A549 (cell line): ENCODE measurements at regions of chr15 and their contacts with region 1.

Region 1: DNA sequence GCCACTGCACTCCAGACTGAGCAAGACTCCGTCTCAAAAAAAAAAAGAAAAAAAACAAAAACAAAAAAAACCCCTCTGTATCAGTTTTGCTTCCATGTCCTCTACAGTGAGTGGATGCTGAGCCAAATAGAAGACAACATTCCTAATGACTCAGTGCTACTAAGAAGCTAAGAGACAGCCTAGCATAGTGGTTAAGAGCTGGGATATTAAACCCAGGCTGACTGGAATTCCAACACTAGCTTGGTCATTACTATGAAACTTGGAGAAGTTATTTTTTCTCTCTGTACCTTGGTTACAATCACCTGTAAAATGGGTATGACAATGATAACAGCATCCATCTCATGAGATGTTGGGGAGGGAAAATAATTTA is 60.9 kb upstream of the PYGO1 start:
- DNase-seq: no peak
- ATAC-seq: peak in 1 of 2 experiments; percentile 69; a peak in 3 of 6 replicates
- H3K4me3 ChIP-seq: no peak overlapping the region
- H3K27ac ChIP-seq: no peak overlapping the region
- H3K4me1 ChIP-seq: no peaks in the 10 kb centered on the region
- CTCF ChIP-seq: no peak
- EP300 ChIP-seq: no peak
- POLR2A ChIP-seq: no peak
- RAD21 ChIP-seq: no peak

Region 2: DNA sequence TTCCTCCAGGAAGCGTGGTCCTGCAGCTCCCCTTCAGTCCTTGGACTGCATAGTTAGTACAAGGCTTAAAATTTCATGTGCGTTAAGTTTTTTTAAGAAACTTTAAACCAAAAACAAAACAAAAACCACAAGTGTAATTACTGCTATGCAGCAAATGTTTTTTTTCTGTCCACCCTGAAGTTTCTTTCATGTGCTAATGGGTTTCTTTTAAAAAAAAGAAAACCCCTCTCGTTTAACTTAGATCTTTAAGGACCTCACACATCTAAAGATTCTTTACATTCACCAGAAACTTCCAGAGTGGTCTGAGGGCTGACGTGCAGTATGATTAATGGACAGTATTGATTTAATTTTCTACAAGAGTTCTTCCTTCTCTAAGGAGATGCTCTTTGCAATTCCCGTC is 11.1 kb after region 1 on chr15:
- CTCF ChIA-PET with region 1: interaction called, 36 read pairs
- POLR2A ChIA-PET with region 1: no interaction called
- DNase-seq: no peak
- ATAC-seq: no peak
- H3K4me3 ChIP-seq: no peak overlapping the region
- H3K27ac ChIP-seq: no peak overlapping the region
- H3K4me1 ChIP-seq: peaks cover 10% of the 10 kb centered on the region
- CTCF ChIP-seq: no peak
- EP300 ChIP-seq: no peak
- POLR2A ChIP-seq: no peak
- RAD21 ChIP-seq: no peak

Region 3: GRCh38 chr15:55799291-55800212 is 150.5 kb after region 1 on chr15:
- CTCF ChIA-PET with region 1: interaction called, 43 read pairs
- POLR2A ChIA-PET with region 1: no interaction called
- DNase-seq: peak; percentile 59 to 63
- ATAC-seq: peak; percentile 48 to 86; a peak in 3 of 6 replicates
- H3K4me3 ChIP-seq: no peak overlapping the region
- H3K27ac ChIP-seq: no peak overlapping the region
- H3K4me1 ChIP-seq: 0 out of 3 replicates have a peak, but pooled peaks cover 3% of the 10 kb centered on the region
- CTCF ChIP-seq: peak; percentile 58
- EP300 ChIP-seq: no peak
- POLR2A ChIP-seq: no peak
- RAD21 ChIP-seq: peak; percentile 65 to 88

Region 4: GRCh38 chr15:55897560-55898336 is 248.7 kb after region 1 on chr15:
- CTCF ChIA-PET with region 1: interaction called, 36 read pairs
- POLR2A ChIA-PET with region 1: no interaction called
- DNase-seq: peak; percentile 76 to 91
- ATAC-seq: peak; percentile 86 to 93
- H3K4me3 ChIP-seq: 0 out of 3 replicates have a peak overlapping the region, but pooled peaks have one; percentile 3
- H3K27ac ChIP-seq: peak overlapping the region; percentile 93 to 96
- H3K4me1 ChIP-seq: peaks cover 86% of the 10 kb centered on the region
- CTCF ChIP-seq: peak; percentile 95
- EP300 ChIP-seq: peak in 1 of 2 experiments; percentile 8; a peak in 1 of 5 replicates
- POLR2A ChIP-seq: no peak
- RAD21 ChIP-seq: peak; percentile 84 to 88